ENCODE measurements at regions of chr18 and their contacts with region 1.

Region 1: DNA sequence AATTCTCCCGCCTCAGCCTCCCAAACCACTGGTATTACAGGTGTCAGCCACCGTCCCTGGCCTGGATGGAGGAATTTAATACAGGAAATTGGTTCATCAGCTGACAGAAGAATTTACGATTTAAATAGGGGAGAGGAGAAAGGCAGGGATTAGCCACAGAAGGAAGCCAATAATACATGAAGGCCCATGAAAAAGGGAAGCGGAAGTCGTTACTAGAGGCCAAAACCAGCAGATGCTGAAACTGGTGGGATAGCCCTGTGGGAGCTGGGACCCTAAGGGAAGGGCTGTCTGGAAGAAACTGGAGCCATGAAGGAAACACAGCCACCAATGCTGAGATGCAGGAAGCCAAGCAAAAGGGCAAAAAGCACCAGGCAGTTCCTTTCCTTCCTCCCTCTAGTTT is 163.7 kb upstream of the RMP24 start:
- H3K4me3 Mint-ChIP-seq: no peak overlapping the region
- H3K27ac Mint-ChIP-seq: peak overlapping the region; percentile 27
- H3K4me1 Mint-ChIP-seq: peaks cover 55% of the 10 kb centered on the region
- H3K27me3 Mint-ChIP-seq: peaks cover 6% of the 10 kb centered on the region

Region 2: DNA sequence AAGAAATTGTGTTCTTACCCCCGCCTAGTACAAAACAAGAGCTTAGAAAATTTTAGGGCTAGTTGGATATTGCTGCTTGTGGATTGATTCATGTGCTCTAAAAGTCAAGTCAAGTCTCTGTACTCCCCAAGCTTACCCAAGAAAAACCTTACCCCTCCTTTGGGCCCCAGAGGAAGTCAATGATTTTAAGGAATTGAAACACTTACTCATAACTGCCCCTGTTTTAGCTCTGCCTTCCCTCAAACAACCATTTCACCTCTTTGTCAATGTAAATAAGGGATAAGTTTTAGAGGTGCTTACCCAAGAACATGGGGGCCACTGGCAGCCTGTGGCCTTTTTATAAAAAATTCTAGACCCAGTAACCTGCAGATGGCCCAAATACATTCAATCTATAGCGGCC is 27.0 kb after region 1 on chr18:
- intact Hi-C with region 1: loop called (anchors 2 kb)
- H3K4me3 Mint-ChIP-seq: no peak overlapping the region
- H3K27ac Mint-ChIP-seq: peak overlapping the region; percentile 70
- H3K4me1 Mint-ChIP-seq: peaks cover 67% of the 10 kb centered on the region
- H3K27me3 Mint-ChIP-seq: no peaks in the 10 kb centered on the region